Spleen (tissue), 13 donors: ENCODE measurements at regions of chr18 and their contacts with region 1.

Region 1: GRCh38 chr18:74551936-74552555 is 17.7 kb downstream of the CNDP1 start:
- DNase-seq: peak; percentile 86
- H3K4me3 ChIP-seq: no peak overlapping the region
- H3K27ac ChIP-seq: no peak overlapping the region
- H3K4me1 ChIP-seq: peaks cover 0 to 17% (median 7%) of the 10 kb centered on the region in 6 donors
- H3K27me3 ChIP-seq: peaks cover 0 to 16% (median 0%) of the 10 kb centered on the region in 7 donors
- CTCF ChIP-seq: peak; percentile 45 to 88 (median 81)
- POLR2A ChIP-seq: no peak

Region 2: DNA sequence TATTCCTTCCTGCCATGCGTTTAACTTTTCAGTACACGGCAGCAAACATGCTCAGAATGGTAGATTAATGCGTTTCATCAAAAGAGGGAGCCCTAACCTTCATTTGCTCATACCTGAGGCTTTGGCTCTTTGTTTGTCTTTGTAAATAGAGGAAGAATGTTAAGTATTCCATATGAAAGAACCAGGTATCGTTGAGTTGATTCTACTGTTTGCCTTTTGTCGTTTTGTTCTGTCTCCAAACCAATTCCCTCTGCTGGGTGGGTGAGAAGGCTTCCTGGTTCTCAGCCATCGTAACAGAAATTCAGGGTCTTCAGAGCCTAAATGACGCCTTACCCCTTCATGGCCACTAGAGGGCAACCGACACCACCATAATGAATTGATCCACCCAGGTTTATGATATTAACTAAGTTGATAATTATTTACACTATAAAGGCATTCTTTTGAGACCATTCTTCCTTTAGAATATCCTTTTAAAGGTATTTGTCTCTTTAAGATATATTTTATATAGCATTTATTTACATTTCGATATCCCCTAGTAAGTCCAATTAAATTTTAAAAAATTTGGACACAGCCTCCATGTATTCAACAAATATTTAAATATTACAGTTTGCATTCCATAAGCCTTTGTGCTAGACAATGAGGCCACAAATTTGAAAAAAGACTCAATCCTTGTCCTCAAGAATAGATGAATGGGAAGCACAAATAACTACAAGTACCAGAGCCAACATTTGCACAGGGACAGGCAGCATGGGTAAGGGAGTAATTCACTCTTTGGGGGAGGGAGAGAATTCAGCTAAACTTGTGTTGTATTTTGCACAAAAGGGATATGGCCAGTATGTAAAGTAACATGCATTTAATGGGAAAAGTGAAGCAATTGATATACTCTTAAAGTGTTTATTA is 355.6 kb before region 1 on chr18:
- intact Hi-C with region 1: loop called (anchors 5 kb)
- DNase-seq: no peak
- H3K4me3 ChIP-seq: peak overlapping the region in 4 of 8 donors; percentile 17 to 60 (median 20)
- H3K27ac ChIP-seq: peak overlapping the region in 4 of 8 donors; percentile 21 to 71 (median 41)
- H3K4me1 ChIP-seq: peaks cover 0 to 20% (median 5%) of the 10 kb centered on the region in 6 donors
- H3K27me3 ChIP-seq: peaks cover 0 to 7% (median 0%) of the 10 kb centered on the region in 7 donors
- CTCF ChIP-seq: peak; percentile 82 to 95 (median 92)
- POLR2A ChIP-seq: no peak

Region 3: GRCh38 chr18:74353169-74353775 is 198.8 kb before region 1 on chr18:
- intact Hi-C with region 1: loop called (anchors 5 kb)
- DNase-seq: no peak
- H3K4me3 ChIP-seq: no peak overlapping the region
- H3K27ac ChIP-seq: no peak overlapping the region
- H3K4me1 ChIP-seq: peaks cover 0 to 24% (median 11%) of the 10 kb centered on the region in 6 donors
- H3K27me3 ChIP-seq: no peaks in the 10 kb centered on the region
- CTCF ChIP-seq: peak in 10 of 11 experiments; percentile 38 to 73 (median 62)
- POLR2A ChIP-seq: no peak

Region 4: GRCh38 chr18:74495581-74496507 is 56.2 kb before region 1 on chr18 and contains the start of gene CNDP2:
- intact Hi-C with region 1: loop called (anchors 10 kb)
- DNase-seq: peak; percentile 100
- H3K4me3 ChIP-seq: peak within 1 kb of the TSS; percentile 77 to 93 (median 90)
- H3K27ac ChIP-seq: peak within 1 kb of the TSS; percentile 86 to 97 (median 94)
- H3K4me1 ChIP-seq: peaks cover 22 to 54% (median 45%) of the 10 kb centered on the region in 6 donors
- H3K27me3 ChIP-seq: no peaks in the 10 kb centered on the region
- CTCF ChIP-seq: peak in 2 of 11 experiments; percentile 2 to 26
- POLR2A ChIP-seq: peak in 2 of 3 donors; percentile 48 to 69
- total RNA-seq, gene CNDP2: 219 to 310 (median 291) TPM

Region 5: GRCh38 chr18:74819433-74820059 is 267.5 kb after region 1 on chr18:
- intact Hi-C with region 1: no loop called
- DNase-seq: no peak
- H3K4me3 ChIP-seq: no peak overlapping the region
- H3K27ac ChIP-seq: no peak overlapping the region
- H3K4me1 ChIP-seq: no peaks in the 10 kb centered on the region
- H3K27me3 ChIP-seq: no peaks in the 10 kb centered on the region
- CTCF ChIP-seq: peak in 2 of 11 experiments; percentile 17 to 25
- POLR2A ChIP-seq: no peak